Caco-2 (cell line): ENCODE measurements at regions of chr1 and their contacts with region 1.

Region 1: DNA sequence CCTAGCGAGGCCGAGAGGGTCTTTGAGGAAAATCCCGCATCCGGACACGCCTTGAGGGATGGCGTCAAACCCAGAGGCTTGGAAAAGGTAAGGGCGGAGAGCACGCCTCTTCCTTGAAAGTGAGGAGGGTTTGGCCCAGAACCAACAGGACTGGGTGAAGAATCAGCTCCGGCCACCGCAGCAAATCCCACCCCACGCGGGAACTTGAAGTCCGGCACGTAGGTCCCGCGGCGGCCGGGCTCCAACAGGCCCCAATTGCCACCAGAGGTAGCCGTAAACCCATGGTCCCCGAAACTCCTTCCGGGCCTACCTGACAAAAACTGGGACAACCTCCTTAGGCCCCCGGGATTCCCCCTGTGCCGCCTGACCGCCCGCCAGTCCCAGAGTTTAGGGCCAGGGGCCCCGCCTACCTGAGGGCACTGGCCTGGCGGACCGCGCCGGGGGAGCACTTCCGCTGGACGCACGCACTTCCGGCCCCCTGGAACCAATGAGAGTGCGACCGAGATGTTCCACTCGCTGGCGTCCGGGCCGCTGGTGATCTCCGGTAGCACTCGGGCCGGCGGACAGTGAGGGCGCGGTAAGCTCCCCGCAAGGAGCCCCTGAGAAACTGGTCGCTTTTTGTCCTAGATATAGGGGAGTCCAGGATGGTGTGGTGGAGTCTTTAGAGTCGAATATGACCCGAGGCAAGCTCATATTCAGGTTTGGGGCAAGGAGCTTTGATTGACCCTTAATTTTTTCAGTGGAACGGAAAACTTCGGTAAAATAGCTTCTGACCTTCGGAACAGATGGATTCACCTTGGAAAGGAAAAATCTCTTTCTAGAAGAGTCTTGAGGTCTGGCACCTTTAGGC is at the starts of genes LZIC and NMNAT1:
- DNase-seq: peak; percentile 92 to 93
- H3K4me3 ChIP-seq: peak within 1 kb of the TSS; percentile 66
- H3K4me3 Mint-ChIP-seq: peak within 1 kb of the TSS; percentile 95
- H3K27ac Mint-ChIP-seq: peak within 1 kb of the TSS; percentile 98
- H3K4me1 ChIP-seq: no peaks in the 10 kb centered on the region
- H3K4me1 Mint-ChIP-seq: peaks cover 4% of the 10 kb centered on the region
- H3K27me3 ChIP-seq: no peaks in the 10 kb centered on the region
- H3K27me3 Mint-ChIP-seq: no peaks in the 10 kb centered on the region
- CTCF ChIP-seq: no peak
- total RNA-seq, gene LZIC: 27.0 and 33.2 TPM in 2 replicates
- total RNA-seq, gene NMNAT1: 3.1 and 3.8 TPM in 2 replicates

Region 2: GRCh38 chr1:9874959-9875635 is 68.1 kb before region 1 on chr1:
- CTCF ChIA-PET with region 1: interaction called, 4 read pairs
- POLR2A ChIA-PET with region 1: no interaction called
- intact Hi-C with region 1: loop called (anchors 1 kb)
- DNase-seq: peak; percentile 75 to 78
- H3K4me3 ChIP-seq: peak overlapping the region; percentile 24
- H3K4me3 Mint-ChIP-seq: peak overlapping the region; percentile 49
- H3K27ac Mint-ChIP-seq: peak overlapping the region; percentile 49
- H3K4me1 ChIP-seq: no peaks in the 10 kb centered on the region
- H3K4me1 Mint-ChIP-seq: no peaks in the 10 kb centered on the region
- H3K27me3 ChIP-seq: no peaks in the 10 kb centered on the region
- H3K27me3 Mint-ChIP-seq: no peaks in the 10 kb centered on the region
- CTCF ChIP-seq: peak; percentile 85 to 88

Region 3: DNA sequence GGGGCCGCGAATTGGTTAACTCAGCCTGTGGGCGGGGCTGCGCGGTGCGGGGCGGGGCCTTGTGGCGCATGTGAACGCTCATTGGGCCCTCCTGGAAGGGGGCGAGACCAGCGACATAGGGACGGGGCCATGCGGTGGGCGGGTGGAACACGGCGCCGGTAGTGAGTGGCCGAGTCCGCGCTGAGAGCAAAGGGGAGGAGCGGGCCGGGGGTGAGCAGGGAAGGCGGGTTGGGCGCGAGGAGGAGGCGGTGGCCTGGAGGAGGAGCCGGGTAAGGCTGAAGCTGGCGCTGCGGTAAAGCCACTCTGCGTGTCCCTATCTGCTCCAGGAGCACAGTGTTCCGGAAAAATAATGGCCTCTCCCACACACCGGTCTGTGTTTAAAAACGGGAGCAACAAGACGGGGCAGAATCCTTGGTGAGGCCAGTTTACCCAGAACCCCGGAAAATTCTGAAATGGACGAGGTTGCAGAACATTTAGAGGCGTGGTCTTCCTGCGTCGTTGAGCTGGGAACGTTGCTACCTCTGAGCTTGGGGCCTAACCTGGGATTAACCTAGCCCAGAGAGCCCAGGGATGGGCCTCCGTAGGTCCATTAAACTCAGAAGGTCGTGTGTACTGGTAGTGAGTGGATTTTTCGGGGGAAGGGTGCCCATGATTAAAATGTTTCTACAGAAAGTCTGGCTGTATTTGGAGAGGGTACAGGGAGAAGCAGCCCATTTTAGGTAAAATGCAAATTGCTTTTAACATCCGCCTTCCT is 32.6 kb before region 1 on chr1:
- CTCF ChIA-PET with region 1: interaction called, 6 read pairs
- POLR2A ChIA-PET with region 1: interaction called, 10 read pairs
- intact Hi-C with region 1: loop called (anchors 2 kb)
- DNase-seq: peak; percentile 99
- H3K4me3 ChIP-seq: peak overlapping the region; percentile 50
- H3K4me3 Mint-ChIP-seq: peak overlapping the region; percentile 96
- H3K27ac Mint-ChIP-seq: peak overlapping the region; percentile 92
- H3K4me1 ChIP-seq: peaks cover 15% of the 10 kb centered on the region
- H3K4me1 Mint-ChIP-seq: peaks cover 26% of the 10 kb centered on the region
- H3K27me3 ChIP-seq: no peaks in the 10 kb centered on the region
- H3K27me3 Mint-ChIP-seq: no peaks in the 10 kb centered on the region
- CTCF ChIP-seq: no peak

Region 4: GRCh38 chr1:10032590-10033358 is 89.6 kb after region 1 on chr1 and contains the start of gene UBE4B:
- CTCF ChIA-PET with region 1: interaction called, 4 read pairs
- POLR2A ChIA-PET with region 1: interaction called, 6 read pairs
- intact Hi-C with region 1: loop called (anchors 1 kb)
- DNase-seq: peak; percentile 96 to 98
- H3K4me3 ChIP-seq: peak within 1 kb of the TSS; percentile 78
- H3K4me3 Mint-ChIP-seq: peak within 1 kb of the TSS; percentile 98
- H3K27ac Mint-ChIP-seq: peak within 1 kb of the TSS; percentile 96
- H3K4me1 ChIP-seq: peaks cover 18% of the 10 kb centered on the region
- H3K4me1 Mint-ChIP-seq: peaks cover 14% of the 10 kb centered on the region
- H3K27me3 ChIP-seq: no peaks in the 10 kb centered on the region
- H3K27me3 Mint-ChIP-seq: no peaks in the 10 kb centered on the region
- CTCF ChIP-seq: peak; percentile 78 to 83
- total RNA-seq, gene UBE4B: 40.2 and 40.3 TPM in 2 replicates